Ovary (tissue), 10 donors: ENCODE measurements at regions of chr1 and their contacts with region 1.

Region 1: GRCh38 chr1:95863086-95863485 is 629.1 kb downstream of the RWDD3 start:
- DNase-seq: no peak
- H3K4me3 ChIP-seq: no peak overlapping the region
- H3K27ac ChIP-seq: no peak overlapping the region
- H3K4me1 ChIP-seq: no peaks in the 10 kb centered on the region
- H3K27me3 ChIP-seq: no peaks in the 10 kb centered on the region
- CTCF ChIP-seq: no peak
- EP300 ChIP-seq: no peak
- POLR2A ChIP-seq: no peak

Region 2: DNA sequence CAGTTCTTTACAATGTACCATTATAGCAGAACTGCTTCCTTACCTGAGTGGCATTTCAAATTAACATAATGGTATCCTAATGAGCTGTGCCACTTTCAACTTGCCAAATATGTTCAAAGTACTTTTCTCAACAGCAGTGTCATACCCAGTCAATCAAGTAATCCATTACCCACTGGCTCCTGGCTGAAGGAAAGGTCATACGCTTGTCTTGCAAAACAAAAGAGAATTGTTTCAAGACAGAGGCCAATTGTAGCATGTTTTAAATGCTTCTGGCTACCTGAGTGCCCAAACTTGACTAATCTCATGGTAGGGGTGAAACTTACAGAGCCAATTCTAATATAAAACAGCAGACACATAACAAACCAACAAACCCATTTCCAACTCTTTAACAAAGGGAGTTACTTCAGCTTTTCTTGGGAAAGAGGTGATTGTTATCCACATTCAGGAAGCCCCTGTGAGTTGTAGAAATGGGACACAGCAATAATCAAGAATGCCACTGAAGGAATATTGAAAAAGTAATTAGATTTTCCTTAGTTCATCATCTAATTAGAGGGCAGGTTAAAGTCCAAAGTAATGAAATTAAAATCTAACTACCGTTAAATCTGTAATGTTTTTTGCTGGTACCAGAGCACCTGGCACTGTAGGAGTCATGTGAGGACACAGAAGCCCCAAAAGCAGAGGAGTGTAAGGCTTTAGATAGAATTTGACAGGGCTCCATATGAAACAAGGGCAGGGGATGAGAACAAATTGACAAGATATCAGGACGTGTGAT is 387.2 kb before region 1 on chr1:
- intact Hi-C with region 1: no loop called
- DNase-seq: no peak
- H3K4me3 ChIP-seq: no peak overlapping the region
- H3K27ac ChIP-seq: no peak overlapping the region
- H3K4me1 ChIP-seq: no peaks in the 10 kb centered on the region
- H3K27me3 ChIP-seq: no peaks in the 10 kb centered on the region
- CTCF ChIP-seq: no peak
- EP300 ChIP-seq: no peak
- POLR2A ChIP-seq: no peak

Region 3: DNA sequence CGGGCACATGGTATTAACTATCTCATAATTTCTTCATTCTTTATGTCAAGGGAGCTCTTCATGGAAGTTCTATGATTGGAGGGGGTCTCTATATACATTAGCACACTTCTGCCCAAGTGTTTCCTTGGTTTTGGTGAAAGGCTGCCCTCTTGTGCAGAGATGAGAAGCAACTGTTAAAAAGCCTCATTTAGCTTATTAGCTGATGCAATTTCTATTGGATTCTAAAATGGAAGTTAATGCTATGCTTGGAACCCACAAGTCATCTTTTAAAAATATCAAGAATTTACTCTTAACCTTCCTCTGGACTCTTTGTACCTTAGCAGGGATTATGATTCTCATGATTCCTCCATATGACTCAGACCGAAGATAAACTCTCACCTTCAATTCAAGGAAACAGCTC is 1187.4 kb after region 1 on chr1:
- intact Hi-C with region 1: loop called in 1 of 4 experiments (anchors 10 kb)
- DNase-seq: no peak
- H3K4me3 ChIP-seq: no peak overlapping the region
- H3K27ac ChIP-seq: no peak overlapping the region
- H3K4me1 ChIP-seq: no peaks in the 10 kb centered on the region
- H3K27me3 ChIP-seq: no peaks in the 10 kb centered on the region
- CTCF ChIP-seq: no peak
- EP300 ChIP-seq: no peak
- POLR2A ChIP-seq: no peak